Activated CD4-positive, alpha-beta T cell treated with anti-CD3 and anti-CD28 coated beads, Interleukin-2, amount 10 ng/mL, durations not matched to agents 24 days and 14 days (primary cell): ENCODE measurements at regions of chr18 and their contacts with region 1.

Region 1: GRCh38 chr18:71887509-71887908 is 656.6 kb downstream of the CBLN2 start:
- DNase-seq: no peak
- H3K4me3 Mint-ChIP-seq: no peak overlapping the region
- H3K27ac Mint-ChIP-seq: no peak overlapping the region
- H3K4me1 Mint-ChIP-seq: no peaks in the 10 kb centered on the region
- H3K27me3 Mint-ChIP-seq: no peaks in the 10 kb centered on the region

Region 2: GRCh38 chr18:71942433-71942832 is 54.9 kb after region 1 on chr18:
- intact Hi-C with region 1: loop called (anchors 10 kb)
- DNase-seq: no peak
- H3K4me3 Mint-ChIP-seq: no peak overlapping the region
- H3K27ac Mint-ChIP-seq: no peak overlapping the region
- H3K4me1 Mint-ChIP-seq: no peaks in the 10 kb centered on the region
- H3K27me3 Mint-ChIP-seq: no peaks in the 10 kb centered on the region

Region 3: DNA sequence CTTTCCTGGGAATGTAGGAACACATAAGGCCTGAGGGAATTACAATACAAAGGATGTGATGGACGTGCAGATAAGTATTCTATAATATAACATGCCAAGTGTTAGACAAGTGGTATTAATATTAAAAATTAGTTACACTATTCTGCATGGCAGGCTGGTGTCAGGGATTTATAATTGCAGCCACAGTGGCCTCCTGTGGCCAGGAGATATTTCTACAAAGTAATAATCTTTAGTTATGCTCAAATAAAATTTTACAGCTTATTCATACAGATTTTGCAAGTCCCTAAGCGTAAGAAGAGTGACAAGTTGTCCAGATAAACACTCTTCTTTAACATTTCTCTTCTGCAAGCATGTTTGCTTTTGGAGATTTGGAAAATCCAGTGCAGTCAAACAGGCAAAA is 747.0 kb after region 1 on chr18:
- intact Hi-C with region 1: no loop called
- DNase-seq: no peak
- H3K4me3 Mint-ChIP-seq: no peak overlapping the region
- H3K27ac Mint-ChIP-seq: no peak overlapping the region
- H3K4me1 Mint-ChIP-seq: no peaks in the 10 kb centered on the region
- H3K27me3 Mint-ChIP-seq: no peaks in the 10 kb centered on the region